Heart right ventricle (tissue), 16 donors: ENCODE measurements at regions of chr7 and their contacts with region 1.

Region 1: GRCh38 chr7:38796626-38797501 is 112.1 kb downstream of the VPS41 start:
- DNase-seq: peak in 1 of 2 donors; percentile 45
- ATAC-seq: no peak
- H3K4me3 ChIP-seq: no peak overlapping the region
- H3K27ac ChIP-seq: no peak overlapping the region
- H3K4me1 ChIP-seq: no peaks in the 10 kb centered on the region
- H3K27me3 ChIP-seq: no peaks in the 10 kb centered on the region
- CTCF ChIP-seq: peak; percentile 67 to 87 (median 76)

Region 2: DNA sequence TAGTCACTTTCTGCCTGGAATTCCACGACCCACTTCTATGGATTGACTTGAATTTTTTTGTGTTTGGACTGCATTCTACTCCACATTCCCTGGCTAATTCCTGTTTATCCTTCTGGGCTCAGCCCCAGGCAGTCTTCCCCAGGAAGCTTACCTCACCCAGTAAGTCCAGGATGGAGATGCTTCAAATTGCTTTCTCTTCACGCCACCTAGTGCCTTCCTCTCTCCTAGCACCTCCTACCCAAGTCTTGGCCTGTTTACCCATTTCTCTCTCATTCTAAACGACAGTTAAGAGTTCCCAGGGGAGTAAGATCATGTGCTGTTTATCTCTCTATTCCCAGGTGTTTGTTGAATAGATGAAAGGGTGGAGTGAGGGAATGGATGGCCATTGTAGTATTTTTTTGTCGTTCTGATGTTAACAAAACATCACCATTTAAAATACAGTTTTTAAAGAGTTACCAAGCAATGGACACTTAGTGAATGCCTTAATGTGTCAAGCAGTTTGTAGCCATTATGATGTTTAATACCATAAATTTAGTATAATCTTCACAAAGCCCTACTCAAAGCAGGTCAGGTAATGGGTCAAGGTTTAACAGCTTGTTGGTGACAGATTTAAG is 478.0 kb before region 1 on chr7:
- intact Hi-C with region 1: no loop called
- DNase-seq: peak in 1 of 2 donors; percentile 20
- ATAC-seq: peak in 7 of 8 donors; percentile 79 to 92 (median 86)
- H3K4me3 ChIP-seq: no peak overlapping the region
- H3K27ac ChIP-seq: peak overlapping the region in 3 of 10 donors; percentile 33 to 63 (median 61)
- H3K4me1 ChIP-seq: peaks cover 0 to 23% (median 0%) of the 10 kb centered on the region in 9 donors
- H3K27me3 ChIP-seq: no peaks in the 10 kb centered on the region
- CTCF ChIP-seq: peak; percentile 12 to 71 (median 61)

Region 3: DNA sequence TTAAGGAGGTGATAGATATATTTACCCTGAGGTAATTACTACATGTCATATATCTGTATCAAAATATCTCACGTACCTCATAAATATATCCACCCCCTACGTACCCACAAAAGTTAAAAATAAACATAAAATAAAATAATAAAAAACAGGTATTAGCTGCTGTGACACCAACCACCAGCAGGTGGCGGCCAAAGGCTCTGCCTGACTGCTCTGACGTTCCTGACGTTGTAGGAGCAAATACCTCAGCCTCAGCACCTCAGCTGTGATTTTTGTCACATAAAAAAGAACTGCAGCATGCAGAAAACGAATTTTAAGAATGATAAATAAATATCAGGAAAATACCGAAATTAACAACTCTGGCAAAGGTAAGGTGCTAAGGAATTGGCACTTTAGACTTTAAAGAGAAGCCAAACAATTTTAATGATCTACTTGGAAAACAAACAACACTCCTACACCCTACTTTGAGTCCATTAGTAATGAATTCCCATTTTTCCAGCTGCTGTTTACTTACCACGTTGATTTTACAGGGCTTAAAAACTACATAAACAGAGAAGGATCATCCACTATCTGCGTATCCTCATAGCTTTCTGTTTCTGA is 398.0 kb before region 1 on chr7:
- intact Hi-C with region 1: no loop called
- DNase-seq: peak; percentile 15 to 50
- ATAC-seq: peak in 3 of 8 donors; percentile 42 to 68 (median 62)
- H3K4me3 ChIP-seq: no peak overlapping the region
- H3K27ac ChIP-seq: no peak overlapping the region
- H3K4me1 ChIP-seq: peaks cover 0 to 12% (median 0%) of the 10 kb centered on the region in 9 donors
- H3K27me3 ChIP-seq: no peaks in the 10 kb centered on the region
- CTCF ChIP-seq: peak; percentile 76 to 94 (median 92)

Region 4: DNA sequence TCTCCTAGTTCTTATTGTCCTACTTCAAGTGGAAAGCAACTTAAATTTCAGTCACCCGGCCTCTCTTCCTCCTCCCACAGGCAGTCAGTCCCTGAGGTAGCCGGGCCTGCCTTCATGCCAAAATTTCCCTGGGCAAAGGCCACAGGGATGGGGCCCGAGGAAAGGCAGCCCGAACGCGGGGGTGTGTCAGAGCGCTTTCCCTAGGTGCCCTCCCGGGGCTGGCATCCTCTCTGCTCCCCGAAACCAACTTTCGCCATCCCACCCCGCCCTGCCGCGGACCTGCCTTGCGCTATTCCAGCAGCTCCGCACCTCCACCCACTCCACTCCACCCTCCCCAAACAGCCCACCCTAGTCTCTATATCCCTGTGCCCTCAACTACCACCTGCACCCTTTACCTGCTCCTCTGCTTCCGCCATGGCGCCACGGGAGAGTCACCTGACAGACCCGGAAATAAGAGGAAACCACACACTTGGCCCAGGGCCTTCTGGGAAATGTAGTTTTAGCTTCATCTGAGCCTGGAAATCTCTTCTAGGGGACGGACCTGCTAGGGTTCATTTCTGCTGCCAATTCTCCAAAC is 112.0 kb after region 1 on chr7 and contains the start of gene VPS41:
- intact Hi-C with region 1: loop called in 1 of 10 experiments (anchors 10 kb)
- DNase-seq: peak; percentile 58 to 83
- ATAC-seq: peak; percentile 84 to 98 (median 97)
- H3K4me3 ChIP-seq: peak within 1 kb of the TSS; percentile 75 to 96 (median 85)
- H3K27ac ChIP-seq: peak within 1 kb of the TSS in 5 of 10 donors; percentile 29 to 86 (median 47)
- H3K4me1 ChIP-seq: peaks cover 0 to 19% (median 9%) of the 10 kb centered on the region in 9 donors
- H3K27me3 ChIP-seq: no peaks in the 10 kb centered on the region
- CTCF ChIP-seq: no peak
- total RNA-seq, gene VPS41: 27.4 to 60.7 (median 50.5) TPM

Region 5: DNA sequence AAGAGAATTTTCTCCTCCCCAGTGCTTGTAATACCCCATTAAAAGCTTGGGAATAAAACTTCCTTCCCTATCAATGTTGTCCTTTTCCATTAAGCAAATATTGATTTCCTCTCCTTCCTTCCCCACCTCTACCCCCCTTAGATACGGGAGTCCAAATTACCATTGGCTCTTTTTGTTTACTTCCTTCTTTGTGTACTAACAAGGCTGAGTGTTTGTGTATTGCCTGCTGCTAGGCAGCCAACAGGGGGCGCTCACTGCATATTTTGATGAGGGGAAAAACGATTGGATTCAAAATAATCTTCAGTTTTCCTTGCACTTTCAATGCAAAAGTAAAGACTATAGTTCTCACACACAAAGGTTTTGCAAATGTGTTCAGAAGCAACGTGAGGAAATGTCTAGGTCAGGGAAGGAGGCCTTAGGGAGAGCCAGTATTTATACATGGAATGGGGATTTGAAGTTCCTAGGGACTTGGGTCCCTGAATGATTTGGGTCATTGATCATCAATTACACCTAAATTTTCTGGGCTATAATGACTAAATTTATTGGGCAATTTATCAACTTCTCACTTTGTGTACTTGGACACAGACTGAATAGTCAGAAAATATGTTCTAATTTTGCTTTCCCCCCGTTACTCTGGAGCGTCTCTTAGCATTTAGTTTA is 135.8 kb after region 1 on chr7:
- intact Hi-C with region 1: loop called in 1 of 10 experiments (anchors 10 kb)
- DNase-seq: peak; percentile 39 to 63
- ATAC-seq: no peak
- H3K4me3 ChIP-seq: no peak overlapping the region
- H3K27ac ChIP-seq: no peak overlapping the region
- H3K4me1 ChIP-seq: peaks cover 0 to 11% (median 0%) of the 10 kb centered on the region in 9 donors
- H3K27me3 ChIP-seq: peaks cover 0 to 4% (median 0%) of the 10 kb centered on the region in 7 donors
- CTCF ChIP-seq: peak; percentile 38 to 85 (median 79)

Region 6: GRCh38 chr7:39265641-39266591 is 469.1 kb after region 1 on chr7:
- intact Hi-C with region 1: no loop called
- DNase-seq: no peak
- ATAC-seq: no peak
- H3K4me3 ChIP-seq: no peak overlapping the region
- H3K27ac ChIP-seq: no peak overlapping the region
- H3K4me1 ChIP-seq: no peaks in the 10 kb centered on the region
- H3K27me3 ChIP-seq: peaks cover 0 to 10% (median 0%) of the 10 kb centered on the region in 7 donors
- CTCF ChIP-seq: no peak

Region 7: DNA sequence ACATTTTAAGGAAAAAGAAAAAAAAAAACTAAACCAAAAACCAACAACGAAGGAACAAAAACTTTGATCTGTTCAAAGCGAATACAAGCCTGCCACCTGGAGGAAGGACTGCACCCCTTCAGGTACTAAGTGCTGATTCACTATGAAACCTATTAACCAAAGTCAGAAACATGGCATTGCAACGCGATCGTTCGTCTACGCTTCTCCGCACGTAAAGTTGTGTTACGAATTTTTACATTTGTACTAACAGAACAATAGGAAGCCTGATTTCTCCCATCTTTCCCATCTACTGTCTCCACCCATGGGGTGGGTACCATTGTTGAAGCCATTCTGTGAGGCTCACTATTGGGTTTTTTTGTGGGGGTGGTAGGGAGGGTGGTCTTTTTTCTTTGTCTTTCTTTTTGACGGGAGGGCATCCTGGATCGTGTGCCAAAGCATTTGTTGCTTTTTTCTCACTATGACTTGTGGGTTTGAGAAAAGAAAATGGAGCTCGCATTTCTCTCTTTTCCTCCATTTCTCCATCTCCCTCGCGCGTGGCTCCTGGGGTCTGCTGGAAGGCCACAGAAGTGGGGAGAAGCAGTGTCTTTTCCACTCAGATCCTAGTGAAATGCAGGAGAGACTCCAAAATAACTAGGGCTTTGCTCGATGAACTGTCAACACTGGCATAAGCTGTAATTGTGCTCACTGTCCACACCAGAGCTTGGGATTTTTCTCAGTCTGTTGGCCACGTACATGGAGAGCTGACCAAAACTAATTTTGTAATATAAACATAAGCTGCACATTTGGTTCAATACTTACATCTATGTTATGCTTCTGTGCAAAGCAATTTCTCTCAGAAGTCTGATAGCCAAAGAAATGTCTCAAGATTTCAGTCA is 668.4 kb after region 1 on chr7:
- intact Hi-C with region 1: loop called in 8 of 10 experiments (anchors 1 to 10 kb)
- DNase-seq: peak in 1 of 2 donors; percentile 21
- ATAC-seq: peak in 5 of 8 donors; percentile 55 to 77 (median 68)
- H3K4me3 ChIP-seq: peak overlapping the region in 1 of 10 donors; percentile 6
- H3K27ac ChIP-seq: no peak overlapping the region
- H3K4me1 ChIP-seq: peaks cover 0 to 6% (median 0%) of the 10 kb centered on the region in 9 donors
- H3K27me3 ChIP-seq: peaks cover 0 to 20% (median 3%) of the 10 kb centered on the region in 7 donors
- CTCF ChIP-seq: peak; percentile 51 to 81 (median 65)

Region 8: GRCh38 chr7:39510864-39511354 is 714.0 kb after region 1 on chr7:
- intact Hi-C with region 1: loop called in 5 of 10 experiments (anchors 5 to 10 kb)
- DNase-seq: no peak
- ATAC-seq: no peak
- H3K4me3 ChIP-seq: no peak overlapping the region
- H3K27ac ChIP-seq: no peak overlapping the region
- H3K4me1 ChIP-seq: no peaks in the 10 kb centered on the region
- H3K27me3 ChIP-seq: peaks cover 0 to 3% (median 0%) of the 10 kb centered on the region in 7 donors
- CTCF ChIP-seq: no peak

Region 9: GRCh38 chr7:39517240-39517639 is 720.4 kb after region 1 on chr7:
- intact Hi-C with region 1: loop called (anchors 1 to 10 kb)
- DNase-seq: no peak
- ATAC-seq: no peak
- H3K4me3 ChIP-seq: no peak overlapping the region
- H3K27ac ChIP-seq: no peak overlapping the region
- H3K4me1 ChIP-seq: peaks cover 0 to 4% (median 0%) of the 10 kb centered on the region in 9 donors
- H3K27me3 ChIP-seq: peaks cover 0 to 8% (median 0%) of the 10 kb centered on the region in 7 donors
- CTCF ChIP-seq: no peak

Region 10: DNA sequence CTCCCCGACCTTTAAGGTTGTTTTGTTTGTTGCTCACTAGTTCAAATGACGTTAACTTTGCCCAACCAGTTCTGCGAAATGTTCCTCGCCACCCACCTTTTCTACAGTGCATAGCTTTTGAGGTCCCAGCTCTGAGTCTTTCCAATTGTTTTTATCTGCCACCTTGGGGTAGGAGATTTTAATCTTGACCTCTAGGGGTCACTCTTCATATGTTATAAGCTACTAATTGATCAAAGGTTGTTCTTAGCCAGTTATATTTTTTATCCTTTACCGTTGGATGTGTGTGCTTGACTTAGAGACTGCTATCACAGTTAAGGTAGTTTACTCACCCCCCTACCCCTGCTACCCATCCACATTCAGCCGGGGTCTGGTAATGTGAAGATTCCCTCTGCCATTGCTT is 1710.3 kb after region 1 on chr7:
- intact Hi-C with region 1: loop called in 1 of 10 experiments (anchors 5 kb)
- DNase-seq: no peak
- ATAC-seq: no peak
- H3K4me3 ChIP-seq: no peak overlapping the region
- H3K27ac ChIP-seq: no peak overlapping the region
- H3K4me1 ChIP-seq: no peaks in the 10 kb centered on the region
- H3K27me3 ChIP-seq: no peaks in the 10 kb centered on the region
- CTCF ChIP-seq: peak in 8 of 9 donors; percentile 9 to 34 (median 26)